ENCODE measurements at regions of chr2 and their contacts with region 1.

Region 1: GRCh38 chr2:200888704-200889625 is at the starts of genes NIF3L1 and PPIL3:
- DNase-seq: peak; percentile 97
- H3K4me3 Mint-ChIP-seq: peak within 1 kb of the TSS; percentile 95
- H3K27ac Mint-ChIP-seq: peak within 1 kb of the TSS; percentile 100
- H3K4me1 Mint-ChIP-seq: peaks cover 45% of the 10 kb centered on the region
- H3K27me3 Mint-ChIP-seq: no peaks in the 10 kb centered on the region
- total RNA-seq, gene NIF3L1: 23.9 and 24.8 TPM in 2 replicates
- total RNA-seq, gene PPIL3: 55.4 and 57.8 TPM in 2 replicates

Region 2: GRCh38 chr2:200703127-200703925 is 185.6 kb before region 1 on chr2:
- intact Hi-C with region 1: loop called (anchors 2 kb)
- DNase-seq: no peak
- H3K4me3 Mint-ChIP-seq: peak overlapping the region; percentile 6
- H3K27ac Mint-ChIP-seq: peak overlapping the region; percentile 87
- H3K4me1 Mint-ChIP-seq: peaks cover 47% of the 10 kb centered on the region
- H3K27me3 Mint-ChIP-seq: no peaks in the 10 kb centered on the region

Region 3: GRCh38 chr2:200765139-200765951 is 123.6 kb before region 1 on chr2:
- intact Hi-C with region 1: loop called (anchors 1 kb)
- DNase-seq: peak; percentile 21
- H3K4me3 Mint-ChIP-seq: peak overlapping the region; percentile 41
- H3K27ac Mint-ChIP-seq: peak overlapping the region; percentile 90
- H3K4me1 Mint-ChIP-seq: peaks cover 35% of the 10 kb centered on the region
- H3K27me3 Mint-ChIP-seq: no peaks in the 10 kb centered on the region

Region 4: DNA sequence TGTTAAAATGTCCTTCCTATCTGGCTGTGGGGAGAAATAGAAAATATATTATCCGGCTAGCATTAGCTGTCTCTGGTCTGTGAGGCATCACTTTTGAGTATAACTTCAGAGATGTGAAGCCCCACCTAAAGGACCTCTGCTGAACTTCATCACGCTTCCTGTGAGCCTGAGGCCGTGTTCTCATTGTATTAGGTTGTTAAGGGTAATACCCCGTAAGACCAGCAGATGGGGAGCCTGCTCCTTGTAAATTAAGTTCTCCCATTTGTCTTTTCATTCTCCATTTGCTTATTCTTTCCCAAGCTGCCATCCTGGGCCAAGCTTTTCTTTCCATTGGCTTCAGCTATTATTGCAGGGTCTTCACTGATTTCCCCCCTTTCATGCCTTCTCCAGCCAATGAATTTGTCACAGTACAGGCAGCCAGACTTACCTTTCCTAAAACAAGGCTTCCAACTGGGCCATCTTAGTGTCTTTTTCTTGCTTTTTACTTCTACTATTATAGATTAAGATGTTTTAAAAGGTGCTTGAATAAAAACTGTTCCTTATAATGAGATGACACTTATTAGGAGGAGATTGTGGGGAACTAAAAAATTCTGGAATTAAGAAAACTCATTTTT is 12.6 kb after region 1 on chr2:
- intact Hi-C with region 1: loop called (anchors 1 kb)
- DNase-seq: peak; percentile 69
- H3K4me3 Mint-ChIP-seq: no peak overlapping the region
- H3K27ac Mint-ChIP-seq: peak overlapping the region; percentile 76
- H3K4me1 Mint-ChIP-seq: peaks cover 13% of the 10 kb centered on the region
- H3K27me3 Mint-ChIP-seq: no peaks in the 10 kb centered on the region

Region 5: DNA sequence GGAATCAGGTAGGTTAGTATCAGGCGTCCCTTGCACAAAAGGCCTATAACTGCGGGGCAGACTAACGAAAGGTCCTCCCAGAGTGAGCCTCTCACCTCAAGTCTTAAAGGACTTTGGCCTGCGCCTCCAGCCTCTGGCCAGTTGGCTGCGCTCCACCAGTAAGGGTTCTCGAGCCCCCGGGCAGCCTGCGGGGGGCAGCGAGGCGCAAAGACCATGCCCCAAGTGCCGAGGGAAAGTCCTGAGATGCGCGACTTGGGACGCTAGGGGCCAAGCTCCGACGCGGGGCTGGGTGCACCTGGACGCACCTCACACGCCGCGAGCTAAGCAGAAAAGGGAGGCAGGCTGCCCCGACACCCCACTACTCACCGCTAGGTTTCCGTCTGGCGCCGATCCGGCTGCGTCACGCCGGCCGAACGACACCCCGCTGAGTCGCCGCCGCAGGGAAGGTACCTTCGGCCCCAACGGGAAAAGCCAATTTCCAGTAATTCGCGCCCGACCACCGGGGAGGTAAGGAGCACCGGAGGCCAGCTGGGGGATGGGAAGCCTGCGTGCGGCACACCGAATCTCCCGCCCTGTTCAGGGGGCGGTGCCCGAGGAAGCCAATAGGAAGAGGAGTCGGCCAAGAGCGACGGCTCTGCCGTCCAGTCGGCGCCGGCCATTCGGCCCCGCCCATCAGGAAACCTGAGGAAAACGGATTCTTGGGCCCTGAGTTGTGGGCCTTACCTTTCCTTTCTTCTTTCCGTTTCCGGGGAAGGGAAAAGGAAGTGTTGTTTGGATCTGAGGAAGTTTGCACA is 74.4 kb after region 1 on chr2 and contains the start of gene ORC2:
- intact Hi-C with region 1: no loop called
- DNase-seq: peak; percentile 91
- H3K4me3 Mint-ChIP-seq: peak within 1 kb of the TSS; percentile 96
- H3K27ac Mint-ChIP-seq: peak within 1 kb of the TSS; percentile 86
- H3K4me1 Mint-ChIP-seq: peaks cover 53% of the 10 kb centered on the region
- H3K27me3 Mint-ChIP-seq: no peaks in the 10 kb centered on the region
- total RNA-seq, gene ORC2: 50.7 and 62.9 TPM in 2 replicates

Region 6: DNA sequence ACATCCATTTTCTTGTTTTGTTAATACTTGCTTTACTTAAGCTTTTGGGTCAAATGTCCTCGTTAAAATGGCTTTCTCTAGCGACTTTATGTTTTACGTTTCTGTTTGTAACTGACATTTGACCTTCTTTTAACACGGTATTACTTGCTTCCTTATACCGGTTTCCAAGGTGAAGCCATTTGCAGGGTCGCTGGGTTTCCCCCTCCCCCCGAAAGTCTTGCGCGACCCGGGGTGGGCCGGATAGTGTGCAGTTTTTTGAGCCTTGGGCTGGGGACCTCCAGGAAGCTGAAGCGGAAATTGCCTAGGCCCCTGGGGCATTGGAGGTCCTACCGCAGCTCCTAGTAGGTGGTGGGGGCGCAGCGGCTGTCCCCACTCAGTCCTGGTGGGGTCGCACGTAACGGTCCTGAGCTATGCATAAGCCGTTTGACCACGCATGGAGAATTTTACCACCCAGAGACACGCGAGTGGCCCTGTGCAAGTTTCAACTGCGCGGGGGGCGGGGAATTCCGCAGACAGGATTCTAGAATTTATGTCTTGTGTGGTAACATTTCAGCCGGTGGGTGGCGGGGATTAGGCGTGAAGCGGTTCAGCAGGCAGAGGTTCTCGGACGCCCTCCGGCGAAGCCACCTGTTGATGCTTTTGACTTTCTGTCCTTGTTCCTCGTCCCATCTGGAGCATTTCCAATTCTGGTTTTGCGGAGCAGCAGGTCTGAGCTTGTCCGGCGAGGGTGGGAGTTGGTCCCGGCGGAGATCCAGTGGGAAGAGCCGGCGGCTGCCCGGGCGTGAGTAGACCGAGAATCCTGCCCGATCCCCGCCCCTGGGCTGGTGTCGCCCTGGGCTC is 229.4 kb after region 1 on chr2:
- intact Hi-C with region 1: loop called (anchors 2 kb)
- DNase-seq: peak; percentile 76
- H3K4me3 Mint-ChIP-seq: peak overlapping the region; percentile 94
- H3K27ac Mint-ChIP-seq: peak overlapping the region; percentile 95
- H3K4me1 Mint-ChIP-seq: peaks cover 42% of the 10 kb centered on the region
- H3K27me3 Mint-ChIP-seq: no peaks in the 10 kb centered on the region